GM10248 (cell line): ENCODE measurements at regions of chr22 and their contacts with region 1.

Region 1: GRCh38 chr22:50276143-50276542 is 6.0 kb upstream of the MAPK11 start:
- DNase-seq: peak; percentile 65
- CTCF ChIP-seq: peak; percentile 68

Region 2: DNA sequence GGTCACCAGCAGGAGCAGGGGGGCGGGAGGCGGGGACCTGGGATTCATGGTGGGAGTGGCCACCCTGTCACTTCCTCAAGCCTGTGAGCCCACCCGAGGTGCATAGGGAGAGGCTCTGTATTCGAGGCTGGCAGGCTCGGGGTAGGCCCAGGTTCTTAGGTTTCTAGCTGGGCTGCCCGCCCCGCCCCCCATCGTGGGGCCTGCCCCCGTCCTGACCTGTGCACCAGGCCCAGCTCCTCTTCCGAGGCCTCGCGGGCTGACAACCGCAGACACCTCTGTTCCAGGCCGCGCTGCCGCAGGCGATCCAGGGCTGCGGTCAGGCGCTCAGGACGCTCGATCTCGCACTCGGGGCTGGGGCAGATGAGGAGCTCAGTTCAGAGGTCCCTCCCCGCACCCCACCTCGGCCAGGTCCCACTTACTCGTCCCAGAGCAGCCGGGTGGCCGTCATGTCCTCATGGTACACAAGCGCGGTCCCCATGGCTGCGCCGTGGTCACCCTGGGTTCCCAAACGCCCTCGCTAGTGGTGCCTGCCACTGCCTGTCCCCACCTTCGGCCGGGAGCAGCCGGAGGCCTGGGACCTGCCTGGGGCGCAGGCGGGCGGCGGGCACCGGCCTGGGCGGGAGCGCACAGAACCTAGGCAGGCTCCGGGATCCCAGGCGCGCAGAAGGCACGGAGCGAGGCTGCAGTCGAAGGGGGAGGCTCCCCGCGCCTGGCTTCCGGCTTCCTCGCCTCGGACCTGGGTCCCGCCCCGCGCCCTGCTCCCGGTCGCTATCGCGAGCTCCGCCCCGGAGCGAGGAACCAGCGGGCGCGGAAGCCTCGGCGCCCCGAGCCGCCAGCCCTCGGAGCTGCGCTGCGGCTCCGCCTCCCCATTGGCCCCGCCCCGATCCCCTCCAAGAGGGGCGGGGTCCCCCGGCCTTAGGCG is 25.3 kb before region 1 on chr22 and contains the start of gene HDAC10:
- CTCF ChIA-PET with region 1: interaction called, 18 read pairs
- POLR2A ChIA-PET with region 1: no interaction called
- DNase-seq: peak; percentile 93
- CTCF ChIP-seq: no peak

Region 3: DNA sequence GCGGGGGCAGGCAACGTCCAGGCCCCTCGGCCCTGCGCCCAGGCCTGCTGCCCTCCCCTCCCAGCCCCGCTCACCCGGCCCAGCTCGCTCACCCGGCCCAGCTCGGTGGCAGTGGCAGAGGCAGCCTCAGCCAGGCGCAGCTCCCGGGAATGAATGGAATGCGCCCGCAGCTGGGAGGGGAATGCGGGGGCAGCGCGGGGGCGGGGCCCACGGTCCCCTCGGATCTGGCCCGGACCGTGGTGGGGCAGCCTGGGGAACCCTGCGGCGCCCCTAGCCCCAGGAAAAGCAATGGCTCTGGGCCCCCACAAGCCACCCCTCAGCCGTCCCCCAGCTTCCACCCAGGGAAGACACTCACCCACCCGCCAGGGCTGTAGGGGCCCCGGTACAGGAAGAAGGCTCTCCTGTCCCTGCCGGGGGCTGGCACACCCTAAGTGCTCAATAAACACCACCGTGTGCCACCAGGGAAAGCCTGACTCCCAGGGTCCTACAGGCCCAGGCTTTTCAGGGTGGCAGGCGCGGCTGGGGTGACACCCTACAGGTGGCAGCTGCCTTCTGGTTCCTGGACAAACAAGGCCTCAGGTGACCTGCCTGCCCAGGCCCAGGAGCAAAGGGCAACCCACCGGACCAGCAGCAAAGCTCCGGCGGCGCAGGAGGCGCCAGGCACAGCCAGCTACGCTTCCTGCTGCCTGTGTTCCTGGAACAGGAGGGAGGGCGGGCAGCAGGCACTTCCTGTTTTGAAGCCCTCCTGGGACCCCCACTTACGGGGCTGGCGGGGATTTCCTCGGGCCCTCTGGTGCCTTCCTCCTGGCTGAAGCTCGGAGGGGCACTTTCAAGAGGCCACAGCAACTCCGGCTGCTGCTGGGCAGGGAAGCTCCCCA is 17.5 kb after region 1 on chr22:
- CTCF ChIA-PET with region 1: interaction called, 68 read pairs
- POLR2A ChIA-PET with region 1: no interaction called
- DNase-seq: no peak
- CTCF ChIP-seq: no peak

Region 4: DNA sequence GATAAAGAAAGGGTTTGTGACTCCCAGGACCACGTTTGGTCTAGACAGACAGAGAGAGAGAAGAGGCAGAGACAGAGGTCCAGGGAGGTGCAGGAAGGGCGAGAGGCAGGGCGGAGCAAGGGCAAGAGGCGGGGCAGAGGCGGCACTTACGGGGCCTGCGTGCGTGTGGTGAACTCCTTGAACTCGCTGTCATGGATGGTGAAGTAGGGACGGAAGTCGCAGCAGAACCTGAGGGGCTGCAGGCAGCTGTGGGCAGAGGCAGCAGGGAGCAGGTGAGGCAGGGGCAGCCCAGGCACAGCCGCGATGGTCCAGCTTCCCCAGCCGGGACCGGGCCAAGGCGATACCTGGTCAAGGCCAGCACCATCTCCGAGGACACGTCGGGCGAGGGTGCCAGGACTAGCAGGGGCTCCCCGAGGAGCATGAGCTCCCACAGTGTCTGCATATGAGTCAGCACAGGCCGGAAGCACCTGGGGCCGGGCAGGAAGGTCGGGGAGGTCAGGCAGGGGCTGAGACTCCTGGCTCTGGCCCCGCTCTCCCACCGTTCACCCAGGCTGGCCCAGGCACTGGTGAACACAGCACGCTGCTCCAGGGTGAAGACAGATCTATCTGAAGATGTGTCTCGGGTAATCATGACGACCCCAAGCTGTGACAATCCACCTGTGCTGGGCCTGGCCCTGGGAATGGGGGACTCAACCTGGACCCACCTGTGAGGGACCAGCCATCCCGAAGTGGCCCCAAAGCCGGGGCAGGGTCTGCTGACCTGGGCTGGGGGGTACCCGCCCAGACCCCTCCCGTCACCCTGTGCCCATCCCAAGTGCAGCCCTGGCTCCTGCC is 38.5 kb after region 1 on chr22:
- CTCF ChIA-PET with region 1: interaction called, 96 read pairs
- POLR2A ChIA-PET with region 1: no interaction called
- DNase-seq: peak; percentile 90
- CTCF ChIP-seq: no peak

Region 5: GRCh38 chr22:50341977-50342650 is 66.0 kb after region 1 on chr22:
- CTCF ChIA-PET with region 1: interaction called, 65 read pairs
- POLR2A ChIA-PET with region 1: no interaction called
- DNase-seq: peak; percentile 83
- CTCF ChIP-seq: peak; percentile 95